Caco-2 (cell line): ENCODE measurements at regions of chr1 and their contacts with region 1.

Region 1: DNA sequence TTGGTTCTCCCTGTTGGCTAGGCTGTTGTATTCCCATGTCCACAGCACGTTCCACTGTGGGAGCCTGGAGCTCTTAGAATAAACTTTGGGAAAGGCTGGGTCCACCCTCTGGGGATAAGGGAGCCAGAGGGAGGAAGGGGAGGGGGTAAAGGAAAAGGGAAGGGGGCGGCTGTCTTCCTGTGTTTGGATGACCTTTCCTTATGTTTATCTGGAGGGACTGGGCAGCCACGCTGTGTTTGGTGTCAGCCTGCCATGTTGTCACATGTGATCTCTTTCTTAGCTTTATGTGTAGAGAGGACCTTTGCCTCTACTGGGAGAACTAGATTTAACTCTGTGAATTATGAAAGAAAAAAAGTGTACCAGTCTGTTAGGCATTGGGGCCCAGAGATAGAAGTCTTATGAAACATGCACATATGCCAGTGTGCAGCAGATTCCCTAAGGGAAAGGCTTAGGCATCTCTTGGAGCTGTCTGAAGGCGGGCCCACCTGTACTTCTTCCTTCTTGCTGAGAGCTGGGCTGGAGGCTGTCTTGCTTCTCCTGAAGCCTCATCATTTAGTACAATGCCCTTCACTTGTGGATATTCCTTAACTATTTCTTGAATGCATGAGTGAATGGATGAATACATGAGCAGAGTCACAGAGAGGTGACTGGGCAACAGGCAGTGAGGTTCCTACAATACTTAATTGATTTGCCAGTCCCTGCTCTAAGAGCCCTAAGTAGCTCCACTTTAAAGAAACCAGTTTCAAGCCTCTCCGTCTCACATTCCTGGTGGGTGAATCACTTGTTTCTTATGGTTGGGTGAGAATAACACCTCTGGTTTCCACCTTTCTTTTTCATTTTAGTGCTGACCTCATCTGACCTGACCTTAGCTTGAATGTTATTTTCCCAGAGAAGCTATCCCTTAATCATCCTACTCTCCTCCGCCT is 62.5 kb upstream of the ARHGAP29 start:
- DNase-seq: peak in 1 of 2 experiments; percentile 56
- H3K4me3 ChIP-seq: no peak overlapping the region
- H3K4me3 Mint-ChIP-seq: no peak overlapping the region
- H3K27ac Mint-ChIP-seq: peak overlapping the region; percentile 75
- H3K4me1 ChIP-seq: peaks cover 26% of the 10 kb centered on the region
- H3K4me1 Mint-ChIP-seq: peaks cover 11% of the 10 kb centered on the region
- H3K27me3 ChIP-seq: no peaks in the 10 kb centered on the region
- H3K27me3 Mint-ChIP-seq: no peaks in the 10 kb centered on the region
- CTCF ChIP-seq: no peak

Region 2: DNA sequence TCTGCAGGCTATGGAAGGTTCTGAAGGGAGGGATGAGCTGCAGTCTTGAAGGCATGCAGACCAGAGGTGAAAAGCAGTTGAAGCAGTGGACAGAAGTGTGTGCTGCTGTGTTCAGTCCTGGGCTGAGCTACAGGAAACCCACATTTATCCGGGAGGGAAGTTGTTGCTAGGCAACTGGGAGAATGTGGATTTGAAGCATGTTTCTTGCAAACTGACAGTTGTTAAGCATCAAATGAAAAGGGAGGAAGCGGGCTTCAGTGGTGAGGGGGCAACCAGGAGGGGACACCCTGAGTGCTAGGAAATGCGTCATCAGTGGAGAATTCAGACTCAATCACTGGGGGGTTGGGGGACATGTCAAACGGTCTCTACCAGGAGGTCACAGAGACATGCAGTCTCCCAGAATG is 207.7 kb before region 1 on chr1:
- CTCF ChIA-PET with region 1: no interaction called
- POLR2A ChIA-PET with region 1: no interaction called
- intact Hi-C with region 1: no loop called
- DNase-seq: no peak
- H3K4me3 ChIP-seq: no peak overlapping the region
- H3K4me3 Mint-ChIP-seq: no peak overlapping the region
- H3K27ac Mint-ChIP-seq: peak overlapping the region; percentile 54
- H3K4me1 ChIP-seq: no peaks in the 10 kb centered on the region
- H3K4me1 Mint-ChIP-seq: peaks cover 9% of the 10 kb centered on the region
- H3K27me3 ChIP-seq: no peaks in the 10 kb centered on the region
- H3K27me3 Mint-ChIP-seq: no peaks in the 10 kb centered on the region
- CTCF ChIP-seq: no peak

Region 3: DNA sequence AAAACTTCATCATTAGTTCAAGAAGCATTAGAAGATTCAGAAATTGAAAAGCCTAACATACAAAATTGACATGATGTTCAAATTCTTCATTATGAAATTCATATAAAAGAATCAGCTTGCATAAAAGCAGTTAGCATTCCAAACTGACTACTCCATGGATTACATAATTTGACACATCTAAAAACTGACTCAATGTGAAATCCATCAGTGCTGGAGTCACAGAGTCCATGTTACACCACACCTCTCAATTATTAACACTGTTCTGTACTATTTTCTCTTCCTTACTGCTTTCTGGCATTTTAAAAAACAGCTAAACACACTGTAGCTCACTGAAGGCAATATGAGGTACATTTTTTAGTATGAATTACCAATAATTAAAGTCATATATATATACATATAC is 90.5 kb before region 1 on chr1:
- CTCF ChIA-PET with region 1: no interaction called
- POLR2A ChIA-PET with region 1: no interaction called
- intact Hi-C with region 1: no loop called
- DNase-seq: no peak
- H3K4me3 ChIP-seq: no peak overlapping the region
- H3K4me3 Mint-ChIP-seq: no peak overlapping the region
- H3K27ac Mint-ChIP-seq: no peak overlapping the region
- H3K4me1 ChIP-seq: no peaks in the 10 kb centered on the region
- H3K4me1 Mint-ChIP-seq: peaks cover 4% of the 10 kb centered on the region
- H3K27me3 ChIP-seq: no peaks in the 10 kb centered on the region
- H3K27me3 Mint-ChIP-seq: no peaks in the 10 kb centered on the region
- CTCF ChIP-seq: no peak

Region 4: GRCh38 chr1:94254073-94254810 is 45.6 kb before region 1 on chr1:
- CTCF ChIA-PET with region 1: no interaction called
- POLR2A ChIA-PET with region 1: no interaction called
- intact Hi-C with region 1: loop called (anchors 5 kb)
- DNase-seq: no peak
- H3K4me3 ChIP-seq: no peak overlapping the region
- H3K4me3 Mint-ChIP-seq: no peak overlapping the region
- H3K27ac Mint-ChIP-seq: no peak overlapping the region
- H3K4me1 ChIP-seq: peaks cover 26% of the 10 kb centered on the region; the same call in 1 of the 2 replicates
- H3K4me1 Mint-ChIP-seq: peaks cover 6% of the 10 kb centered on the region
- H3K27me3 ChIP-seq: no peaks in the 10 kb centered on the region
- H3K27me3 Mint-ChIP-seq: no peaks in the 10 kb centered on the region
- CTCF ChIP-seq: no peak

Region 5: GRCh38 chr1:94323311-94324167 is 23.6 kb after region 1 on chr1:
- CTCF ChIA-PET with region 1: no interaction called
- POLR2A ChIA-PET with region 1: no interaction called
- intact Hi-C with region 1: no loop called
- DNase-seq: no peak
- H3K4me3 ChIP-seq: no peak overlapping the region
- H3K4me3 Mint-ChIP-seq: no peak overlapping the region
- H3K27ac Mint-ChIP-seq: peak overlapping the region; percentile 75
- H3K4me1 ChIP-seq: peaks cover 86% of the 10 kb centered on the region
- H3K4me1 Mint-ChIP-seq: peaks cover 53% of the 10 kb centered on the region
- H3K27me3 ChIP-seq: no peaks in the 10 kb centered on the region
- H3K27me3 Mint-ChIP-seq: no peaks in the 10 kb centered on the region
- CTCF ChIP-seq: no peak